ENCODE measurements at regions of chr1 and their contacts with region 1.

Region 1: DNA sequence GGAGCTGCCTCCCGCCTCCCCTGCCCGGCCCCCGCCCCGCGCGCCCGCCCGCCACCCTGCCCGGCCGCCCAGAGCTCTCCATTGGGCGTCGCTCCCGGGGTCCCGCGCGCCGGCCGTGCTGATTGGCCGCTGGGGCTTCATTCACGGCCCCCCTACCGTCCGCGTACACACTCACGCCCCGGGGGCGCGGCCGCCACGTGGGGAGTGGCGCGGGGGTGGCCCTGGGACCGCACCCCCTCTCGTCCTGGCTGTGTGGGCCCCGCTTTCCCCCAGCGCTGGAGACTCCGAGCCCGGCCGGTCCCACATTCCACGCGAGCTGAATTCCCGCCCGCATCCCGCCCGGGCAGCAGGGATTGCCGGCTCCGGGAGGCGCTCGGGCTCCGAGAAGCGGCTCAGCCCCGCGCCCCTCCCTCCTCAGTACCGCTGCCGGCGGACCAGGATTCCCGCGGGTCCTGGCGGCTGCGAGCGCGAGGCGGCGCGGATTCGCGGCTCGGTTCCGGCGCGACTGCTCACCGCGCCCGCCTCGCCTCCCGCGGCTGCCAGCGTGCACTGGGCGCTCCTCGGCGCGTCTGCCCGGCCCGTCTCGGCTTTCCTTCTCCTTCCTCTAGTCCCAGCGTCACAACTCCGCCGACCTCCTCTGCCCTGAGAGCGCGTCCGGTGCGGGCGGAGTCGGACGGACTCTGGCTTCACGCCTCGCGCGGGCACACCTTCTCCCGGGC is 450 bp upstream of the POU3F1 start:
- DNase-seq: peak; percentile 70 to 93 (median 90)
- H3K4me3 ChIP-seq: peak overlapping the region; percentile 49 to 81 (median 68)
- H3K27ac ChIP-seq: peak overlapping the region in 39 of 59 donors; percentile 1 to 73 (median 51)
- H3K27me3 ChIP-seq: peaks cover 0 to 39% (median 22%) of the 10 kb centered on the region in 45 donors
- CTCF ChIP-seq: peak in 28 of 56 donors; percentile 6 to 47 (median 26)

Region 2: DNA sequence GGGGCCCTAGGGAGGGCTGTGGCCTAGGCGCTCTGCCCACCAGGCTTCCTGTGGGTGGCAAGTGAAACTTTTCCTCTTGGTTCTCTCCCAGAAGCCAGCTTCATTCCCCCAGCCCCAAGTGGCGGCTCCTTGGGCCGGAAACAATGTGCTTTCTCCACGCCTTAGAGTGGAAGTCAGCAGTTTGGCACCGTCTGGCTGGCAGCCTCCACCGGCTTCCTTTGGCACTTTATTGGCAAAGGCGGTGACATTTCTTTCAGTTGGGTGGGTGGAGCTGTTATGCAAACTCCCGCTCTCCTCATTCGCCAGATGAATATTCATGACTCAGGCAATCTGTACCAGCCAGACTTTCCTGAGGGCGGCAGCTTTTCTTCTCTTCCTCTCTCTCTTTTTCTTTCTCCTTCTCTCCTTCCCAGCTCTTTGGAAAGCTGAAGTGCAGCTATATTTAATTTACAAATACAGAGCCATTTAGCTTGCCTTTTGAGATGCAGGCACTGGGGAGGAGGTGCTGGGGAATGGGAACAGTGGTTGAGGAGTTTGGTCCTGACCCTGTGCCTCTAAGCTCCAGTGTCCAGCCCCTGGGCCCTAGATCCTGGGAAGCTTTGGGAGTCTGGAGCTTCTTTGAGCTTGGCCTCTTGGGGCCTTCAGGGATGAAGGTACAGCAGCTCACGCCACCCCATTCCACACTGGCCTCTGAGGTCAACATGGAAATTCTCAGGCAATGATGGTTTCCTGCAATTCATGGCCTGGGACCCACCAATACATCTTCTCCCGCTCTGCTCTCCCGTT is 67.4 kb after region 1 on chr1:
- intact Hi-C with region 1: loop called in 1 of 2 experiments (anchors 2 kb)
- DNase-seq: peak; percentile 14 to 84 (median 68)
- H3K4me3 ChIP-seq: no peak overlapping the region
- H3K27ac ChIP-seq: peak overlapping the region in 44 of 59 donors; percentile 7 to 81 (median 56)
- H3K27me3 ChIP-seq: no peaks in the 10 kb centered on the region
- CTCF ChIP-seq: peak in 1 of 56 donors; percentile 9

Region 3: GRCh38 chr1:38138498-38139233 is 91.6 kb after region 1 on chr1:
- intact Hi-C with region 1: loop called in 1 of 2 experiments (anchors 5 kb)
- DNase-seq: peak in 8 of 10 donors; percentile 48 to 83 (median 74)
- H3K4me3 ChIP-seq: no peak overlapping the region
- H3K27ac ChIP-seq: peak overlapping the region in 11 of 59 donors; percentile 14 to 57 (median 27)
- H3K27me3 ChIP-seq: peaks cover 0 to 9% (median 0%) of the 10 kb centered on the region in 45 donors
- CTCF ChIP-seq: peak in 14 of 56 donors; percentile 7 to 35 (median 16)

Region 4: GRCh38 chr1:38586993-38587646 is 540.1 kb after region 1 on chr1:
- intact Hi-C with region 1: loop called (anchors 10 kb)
- DNase-seq: peak in 2 of 10 donors; percentile 38 to 59
- H3K4me3 ChIP-seq: no peak overlapping the region
- H3K27ac ChIP-seq: no peak overlapping the region
- H3K27me3 ChIP-seq: no peaks in the 10 kb centered on the region
- CTCF ChIP-seq: peak; percentile 52 to 88 (median 78)